Activated CD4-positive, alpha-beta memory T cell treated with anti-CD3 and anti-CD28 coated beads for 36 hours (primary cell): ENCODE measurements at regions of chr10 and their contacts with region 1.

Region 1: DNA sequence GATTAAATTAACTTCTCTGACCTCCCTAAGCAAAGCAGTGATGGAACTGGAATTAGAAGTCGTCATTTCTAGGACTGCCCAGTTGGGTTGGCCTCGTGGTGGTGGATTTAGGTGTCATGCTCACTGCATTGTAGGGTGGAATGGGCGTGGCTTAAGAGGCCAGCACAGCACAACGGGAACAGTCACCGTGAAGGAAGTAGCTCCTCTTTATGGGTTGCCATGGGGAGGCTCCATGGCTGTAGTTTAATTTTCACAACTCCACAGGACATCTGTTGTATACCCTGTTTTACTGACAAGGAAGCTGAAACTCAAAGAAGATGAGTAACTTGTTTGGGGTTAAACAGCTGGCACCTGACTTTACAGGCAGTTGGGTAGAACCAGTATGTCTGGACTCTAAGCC is 208.3 kb downstream of the CELF2 start:
- DNase-seq: peak; percentile 88
- H3K4me3 Mint-ChIP-seq: peak overlapping the region; percentile 62
- H3K27ac Mint-ChIP-seq: peak overlapping the region; percentile 97
- H3K4me1 Mint-ChIP-seq: peaks cover 95% of the 10 kb centered on the region
- H3K27me3 Mint-ChIP-seq: no peaks in the 10 kb centered on the region

Region 2: GRCh38 chr10:10959666-10960065 is 266.3 kb before region 1 on chr10:
- CTCF ChIA-PET with region 1: no interaction called
- POLR2A ChIA-PET with region 1: no interaction called
- intact Hi-C with region 1: no loop called
- DNase-seq: no peak
- H3K4me3 Mint-ChIP-seq: no peak overlapping the region
- H3K27ac Mint-ChIP-seq: no peak overlapping the region
- H3K4me1 Mint-ChIP-seq: peaks cover 7% of the 10 kb centered on the region
- H3K27me3 Mint-ChIP-seq: peaks cover 12% of the 10 kb centered on the region

Region 3: GRCh38 chr10:11209830-11210181 is 16.1 kb before region 1 on chr10:
- CTCF ChIA-PET with region 1: no interaction called
- POLR2A ChIA-PET with region 1: interaction called, 14 read pairs
- intact Hi-C with region 1: loop called (anchors 1 kb)
- DNase-seq: no peak
- H3K4me3 Mint-ChIP-seq: peak overlapping the region; percentile 65
- H3K27ac Mint-ChIP-seq: peak overlapping the region; percentile 92
- H3K4me1 Mint-ChIP-seq: peaks cover 97% of the 10 kb centered on the region
- H3K27me3 Mint-ChIP-seq: no peaks in the 10 kb centered on the region

Region 4: DNA sequence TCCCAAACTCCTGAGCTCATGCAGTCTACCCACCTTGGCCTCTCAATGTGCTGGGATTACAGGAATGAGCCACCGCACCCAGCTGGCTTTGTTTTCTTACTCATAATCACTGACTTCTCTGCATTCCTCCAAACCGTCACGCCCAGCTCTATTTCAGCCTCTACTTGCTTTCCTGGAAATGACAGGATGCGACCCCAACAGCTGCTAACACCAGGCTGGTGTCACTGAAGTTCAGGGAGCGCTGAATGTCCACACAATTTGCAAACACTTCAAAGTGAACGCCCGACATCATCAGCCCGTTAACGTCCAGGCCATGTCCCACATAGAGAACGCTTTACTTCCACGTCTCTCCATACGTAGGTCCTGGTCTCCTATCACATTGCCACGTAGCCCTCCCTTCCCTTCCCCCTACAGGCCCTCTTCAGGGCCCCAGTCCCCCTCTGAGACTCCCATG is 584.4 kb after region 1 on chr10:
- CTCF ChIA-PET with region 1: no interaction called
- POLR2A ChIA-PET with region 1: no interaction called
- intact Hi-C with region 1: no loop called
- DNase-seq: no peak
- H3K4me3 Mint-ChIP-seq: no peak overlapping the region
- H3K27ac Mint-ChIP-seq: no peak overlapping the region
- H3K4me1 Mint-ChIP-seq: no peaks in the 10 kb centered on the region
- H3K27me3 Mint-ChIP-seq: peaks cover 8% of the 10 kb centered on the region